Gastrocnemius medialis (tissue), 4 donors: ENCODE measurements at regions of chr10 and their contacts with region 1.

Region 1: DNA sequence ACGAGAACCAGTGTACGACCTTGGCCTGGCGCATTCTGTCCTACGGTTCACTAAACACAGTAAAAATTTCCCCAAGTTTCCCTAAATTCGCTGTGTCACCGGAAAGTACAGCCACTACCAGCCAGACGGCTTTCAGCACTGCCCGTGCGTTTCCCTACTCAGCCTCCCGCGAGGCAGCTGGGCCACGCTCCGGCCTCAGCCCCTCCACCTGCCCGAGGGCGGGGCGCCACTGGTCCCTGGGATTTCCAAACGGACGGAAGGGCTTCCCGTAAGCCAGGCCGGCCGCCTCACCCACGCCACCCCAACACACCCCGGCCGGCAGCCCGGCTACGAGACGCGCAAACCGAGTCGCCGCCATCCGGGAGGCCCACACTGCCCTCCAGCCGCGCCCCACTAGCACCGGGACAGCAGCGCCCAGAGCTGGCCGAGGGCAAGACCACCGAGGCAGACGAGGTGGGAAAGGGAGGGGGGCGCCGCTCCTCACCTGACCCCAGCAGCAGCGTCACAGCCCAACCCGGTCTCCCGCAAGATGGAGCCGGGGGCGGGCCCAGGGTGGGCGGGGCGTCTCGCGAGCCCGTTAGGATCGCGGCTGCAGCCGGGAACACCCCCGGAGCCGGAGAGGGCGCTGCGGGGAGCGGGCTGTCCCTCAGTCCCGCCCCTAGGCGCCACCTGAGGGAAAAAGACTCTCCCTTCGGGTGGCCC is at the start of gene ANXA7:
- DNase-seq: peak; percentile 89 to 93
- ATAC-seq: peak; percentile 82
- H3K4me3 ChIP-seq: peak within 1 kb of the TSS; percentile 80 to 96 (median 93)
- H3K27ac ChIP-seq: peak within 1 kb of the TSS; percentile 92 to 99 (median 98)
- H3K4me1 ChIP-seq: peaks cover 47 to 52% of the 10 kb centered on the region in 2 donors
- H3K27me3 ChIP-seq: no peaks in the 10 kb centered on the region
- CTCF ChIP-seq: peak in 2 of 5 experiments; percentile 60 to 61
- POLR2A ChIP-seq: peak; percentile 82 to 87
- total RNA-seq, gene ANXA7: 169 to 203 (median 186) TPM

Region 2: DNA sequence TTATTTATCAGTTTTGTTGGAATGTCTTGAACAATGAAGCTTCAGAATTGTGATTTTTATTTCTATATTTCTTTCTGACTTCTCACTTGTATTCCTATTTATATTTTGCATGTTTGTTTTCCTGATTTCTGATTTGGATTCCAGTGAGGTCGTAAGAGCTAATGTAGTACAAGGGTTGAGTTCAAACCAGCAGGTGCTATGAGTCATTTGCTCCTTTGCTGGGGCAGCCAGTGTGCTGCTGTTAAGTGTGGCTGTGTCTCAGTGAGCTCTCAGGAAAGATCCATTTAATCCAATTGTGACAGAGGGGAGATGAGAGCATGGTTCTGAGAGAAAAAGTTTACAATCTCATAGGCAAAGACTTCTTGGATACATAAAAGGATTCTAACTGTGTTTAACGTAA is 673.2 kb before region 1 on chr10:
- in situ Hi-C with region 1: no loop called
- intact Hi-C with region 1: no loop called
- DNase-seq: peak; percentile 65 to 73
- ATAC-seq: peak; percentile 90 to 95
- H3K4me3 ChIP-seq: no peak overlapping the region
- H3K27ac ChIP-seq: peak overlapping the region; percentile 83 to 90 (median 86)
- H3K4me1 ChIP-seq: peaks cover 73 to 74% of the 10 kb centered on the region in 2 donors
- H3K27me3 ChIP-seq: no peaks in the 10 kb centered on the region
- CTCF ChIP-seq: no peak
- POLR2A ChIP-seq: no peak

Region 3: DNA sequence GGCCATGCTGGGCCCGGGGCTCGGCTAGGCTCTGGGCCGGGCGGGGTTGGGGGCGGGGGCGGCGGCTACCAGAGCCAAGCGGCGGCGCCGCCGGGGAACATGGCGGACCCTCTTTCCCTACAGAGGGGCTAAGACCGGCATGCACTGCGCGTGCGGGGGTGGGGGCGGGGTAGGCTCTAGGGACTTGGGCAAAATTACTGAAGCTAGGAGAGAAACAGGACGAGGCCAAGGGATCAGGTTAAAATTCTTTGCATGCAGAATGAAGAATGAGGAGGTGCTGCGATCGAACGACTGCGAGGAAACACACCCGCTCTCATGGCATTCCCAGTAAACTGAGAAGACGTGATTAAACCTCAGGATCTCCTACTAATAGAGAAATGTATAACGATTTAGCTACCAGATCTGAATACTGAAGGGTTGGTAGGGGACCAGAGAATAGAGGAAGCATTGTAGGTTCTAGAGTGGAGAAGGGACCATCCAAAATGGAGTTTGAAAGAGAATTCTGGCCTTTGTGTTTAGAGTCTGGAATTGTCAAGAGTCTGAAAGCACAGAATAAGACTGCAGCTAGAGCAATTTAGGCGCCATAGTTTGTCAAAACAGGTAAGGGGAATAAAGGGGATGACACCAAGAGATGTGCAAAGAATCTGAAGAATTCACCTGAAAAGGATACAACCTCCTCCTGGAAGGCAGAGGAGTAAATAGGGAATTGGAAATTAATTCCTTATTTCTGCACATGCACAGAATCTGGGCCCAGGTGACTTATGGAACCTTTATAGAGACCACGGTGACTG is 82.4 kb after region 1 on chr10 and contains the start of gene PPP3CB:
- in situ Hi-C with region 1: no loop called
- intact Hi-C with region 1: loop called (anchors 2 kb)
- DNase-seq: peak; percentile 84 to 90
- ATAC-seq: peak; percentile 89 to 91
- H3K4me3 ChIP-seq: peak within 1 kb of the TSS; percentile 79 to 99 (median 90)
- H3K27ac ChIP-seq: peak within 1 kb of the TSS; percentile 93 to 99 (median 96)
- H3K4me1 ChIP-seq: peaks cover 46 to 48% of the 10 kb centered on the region in 2 donors
- H3K27me3 ChIP-seq: no peaks in the 10 kb centered on the region
- CTCF ChIP-seq: no peak
- POLR2A ChIP-seq: no peak
- total RNA-seq, gene PPP3CB: 60.1 to 91.6 (median 68.7) TPM

Region 4: DNA sequence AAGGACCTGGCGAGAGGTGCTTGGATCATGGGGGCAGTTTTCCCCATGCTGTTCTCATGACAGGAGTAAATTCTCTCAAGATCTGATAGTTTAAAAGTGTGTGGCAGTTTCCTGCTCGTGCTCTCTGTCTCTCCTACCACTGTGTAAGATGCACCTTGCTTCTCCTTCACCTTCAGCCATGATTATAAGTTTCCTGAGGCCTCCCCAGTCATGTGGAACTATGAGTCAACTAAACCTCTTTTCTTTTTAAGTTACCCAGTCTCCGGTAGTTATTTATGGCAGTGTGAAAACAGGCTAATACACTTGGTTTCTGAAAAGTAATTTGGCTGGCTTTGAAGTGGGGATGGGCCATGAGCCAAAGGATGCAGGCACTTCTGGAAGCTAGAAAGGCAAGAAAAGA is 1144.7 kb after region 1 on chr10:
- in situ Hi-C with region 1: no loop called
- intact Hi-C with region 1: no loop called
- DNase-seq: no peak
- ATAC-seq: no peak
- H3K4me3 ChIP-seq: no peak overlapping the region
- H3K27ac ChIP-seq: no peak overlapping the region
- H3K4me1 ChIP-seq: no peaks in the 10 kb centered on the region
- H3K27me3 ChIP-seq: no peaks in the 10 kb centered on the region
- CTCF ChIP-seq: no peak
- POLR2A ChIP-seq: no peak